ENCODE measurements at regions of chr1 and their contacts with region 1.

Region 1: DNA sequence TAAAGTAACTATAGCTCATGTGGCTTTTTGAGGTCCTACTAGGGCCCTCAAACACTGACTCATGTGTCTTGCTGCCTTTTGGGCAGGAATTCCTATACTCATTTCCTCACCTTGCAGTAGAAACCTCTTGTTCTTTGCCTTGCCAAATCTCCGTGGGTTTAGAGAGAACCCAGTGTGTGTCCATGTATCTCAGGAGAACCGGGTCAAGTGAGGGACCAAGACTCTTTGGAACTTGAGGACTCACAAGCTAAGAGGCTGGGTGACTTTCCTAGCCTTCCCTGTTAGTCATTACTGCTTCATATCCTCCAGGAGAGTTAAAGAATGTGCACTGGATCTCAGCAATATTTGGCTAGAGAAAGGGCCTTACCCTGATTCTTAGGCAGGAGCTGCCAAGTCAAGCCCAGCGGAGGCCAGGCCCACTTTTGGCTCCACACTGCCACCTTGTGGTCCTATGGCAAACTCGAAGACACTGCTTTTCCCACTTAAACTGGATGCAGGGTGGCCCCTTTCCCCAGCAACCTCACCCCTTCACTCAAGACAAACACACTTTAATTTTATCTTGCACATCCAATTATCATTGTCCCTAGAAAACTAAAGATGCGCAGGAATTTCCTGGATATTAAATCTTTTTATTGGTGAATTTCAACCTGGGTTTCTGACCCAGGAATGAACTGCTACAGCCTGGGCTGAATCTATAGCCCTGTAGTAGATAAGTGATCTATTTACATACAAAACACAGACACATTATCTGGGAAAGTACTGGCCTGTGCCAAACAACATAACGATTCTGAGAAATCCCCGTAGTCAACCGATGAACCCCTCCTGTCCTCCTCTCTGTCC is 10.6 kb downstream of the AVPR1B start:
- DNase-seq: peak; percentile 39
- ATAC-seq: peak; percentile 98
- H3K4me3 ChIP-seq: no peak overlapping the region
- H3K27ac ChIP-seq: no peak overlapping the region
- H3K4me1 ChIP-seq: no peaks in the 10 kb centered on the region
- H3K27me3 ChIP-seq: peaks cover 0 to 2% of the 10 kb centered on the region in 2 experiments; a peak in 2 of 4 replicates
- CTCF ChIP-seq: peak; percentile 83 to 96 (median 87)
- EP300 ChIP-seq: no peak
- POLR2A ChIP-seq: no peak
- RAD21 ChIP-seq: peak; percentile 98

Region 2: GRCh38 chr1:205849619-205850355 is 256.8 kb before region 1 on chr1 and contains the start of gene PM20D1:
- CTCF ChIA-PET with region 1: no interaction called
- POLR2A ChIA-PET with region 1: no interaction called
- RAD21 ChIA-PET with region 1: no interaction called
- SMC1A ChIA-PET with region 1: no interaction called
- in situ Hi-C with region 1: no loop called
- intact Hi-C with region 1: no loop called
- DNase-seq: no peak
- ATAC-seq: no peak
- H3K4me3 ChIP-seq: no peak within 1 kb of the TSS
- H3K27ac ChIP-seq: no peak within 1 kb of the TSS
- H3K4me1 ChIP-seq: no peaks in the 10 kb centered on the region
- H3K27me3 ChIP-seq: no peaks in the 10 kb centered on the region
- CTCF ChIP-seq: no peak
- EP300 ChIP-seq: no peak
- POLR2A ChIP-seq: no peak
- RAD21 ChIP-seq: no peak
- polyA plus RNA-seq, gene PM20D1: not detected

Region 3: DNA sequence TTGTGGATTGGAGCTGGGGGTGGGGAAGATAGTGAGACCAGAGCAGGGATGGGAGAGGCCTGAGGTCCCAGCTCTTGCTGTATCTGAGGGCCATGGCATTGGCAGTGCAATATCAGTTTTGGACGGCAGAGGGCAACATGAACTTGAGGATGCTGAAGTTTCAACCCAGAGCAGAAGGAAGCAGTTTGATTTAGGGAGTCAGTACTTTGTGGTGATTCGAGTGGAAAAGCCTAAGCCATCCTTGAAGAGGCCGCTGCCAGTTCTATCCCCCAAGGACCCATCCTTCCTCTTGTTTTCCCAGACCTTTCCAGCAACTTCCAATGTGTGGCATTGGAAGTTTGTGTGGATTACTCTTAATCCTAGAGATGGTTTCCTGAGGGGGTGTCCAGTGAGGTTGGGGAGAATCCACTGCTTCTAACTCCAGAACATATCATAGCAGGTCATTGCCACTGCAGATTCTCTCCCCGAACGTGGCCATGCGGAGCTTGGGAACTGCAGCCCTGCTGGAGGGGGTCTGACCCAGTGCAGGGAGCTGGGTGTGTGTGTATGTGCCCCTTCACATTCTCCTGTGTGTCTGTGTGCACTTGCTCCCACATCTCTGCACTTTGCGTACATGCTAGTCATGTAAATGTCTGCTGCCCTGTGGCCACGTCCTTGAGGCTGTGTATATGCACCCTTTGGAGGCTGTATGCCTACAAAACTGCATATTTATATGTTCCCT is 187.4 kb before region 1 on chr1:
- CTCF ChIA-PET with region 1: interaction called, 37 read pairs
- POLR2A ChIA-PET with region 1: no interaction called
- RAD21 ChIA-PET with region 1: interaction called, 32 read pairs
- SMC1A ChIA-PET with region 1: interaction called, 24 read pairs
- in situ Hi-C with region 1: no loop called
- intact Hi-C with region 1: loop called (anchors 1 kb)
- DNase-seq: peak; percentile 24
- ATAC-seq: peak; percentile 94
- H3K4me3 ChIP-seq: no peak overlapping the region
- H3K27ac ChIP-seq: no peak overlapping the region
- H3K4me1 ChIP-seq: no peaks in the 10 kb centered on the region; the same call in 1 of the 2 replicates
- H3K27me3 ChIP-seq: peaks cover 2 to 4% of the 10 kb centered on the region in 2 experiments; a peak in 2 of 4 replicates
- CTCF ChIP-seq: peak; percentile 90 to 93 (median 93)
- EP300 ChIP-seq: no peak
- POLR2A ChIP-seq: no peak
- RAD21 ChIP-seq: peak; percentile 91

Region 4: DNA sequence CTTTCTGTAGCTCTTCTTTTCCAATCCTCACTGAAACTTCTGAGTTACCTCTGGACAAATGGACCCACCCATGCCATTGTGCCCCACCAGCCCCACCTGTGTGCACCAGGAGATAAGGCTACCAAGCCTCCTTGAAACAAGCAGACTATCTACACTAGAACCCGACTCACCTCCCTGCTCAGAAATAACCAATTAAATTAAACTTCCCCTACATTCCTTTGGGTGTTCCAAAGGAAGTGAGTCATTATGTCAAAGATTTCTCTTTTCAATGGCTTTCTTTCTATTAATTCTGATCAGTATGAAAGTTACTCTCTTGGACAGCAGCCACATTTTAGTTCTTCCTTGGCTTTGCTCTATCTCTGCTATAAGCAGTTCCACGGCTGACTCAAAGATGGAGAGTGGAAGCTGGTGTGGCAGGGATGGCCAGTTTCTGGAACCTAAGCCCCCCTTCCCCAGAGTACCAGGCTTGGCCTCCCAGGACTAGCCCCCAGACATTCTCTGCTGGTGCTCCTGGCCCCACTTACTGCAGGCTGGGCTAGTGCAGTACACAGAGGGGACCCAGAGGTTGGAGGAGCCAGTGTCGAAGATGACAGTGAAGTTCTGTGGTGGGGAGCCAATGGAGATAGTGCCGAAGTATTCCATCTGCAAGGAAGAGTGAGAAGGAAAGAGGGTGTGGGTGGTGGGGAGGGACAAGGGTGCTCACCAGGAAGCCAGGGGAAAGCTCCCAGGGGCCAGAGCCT is 84.8 kb before region 1 on chr1:
- CTCF ChIA-PET with region 1: interaction called, 384 read pairs
- POLR2A ChIA-PET with region 1: no interaction called
- RAD21 ChIA-PET with region 1: interaction called, 12 read pairs
- SMC1A ChIA-PET with region 1: interaction called, 329 read pairs
- in situ Hi-C with region 1: loop called (anchors 5 kb)
- intact Hi-C with region 1: no loop called
- DNase-seq: no peak
- ATAC-seq: no peak
- H3K4me3 ChIP-seq: no peak overlapping the region
- H3K27ac ChIP-seq: no peak overlapping the region
- H3K4me1 ChIP-seq: no peaks in the 10 kb centered on the region
- H3K27me3 ChIP-seq: peaks cover 0 to 5% of the 10 kb centered on the region in 2 experiments; a peak in 2 of 4 replicates
- CTCF ChIP-seq: no peak
- EP300 ChIP-seq: no peak
- POLR2A ChIP-seq: no peak
- RAD21 ChIP-seq: no peak

Region 5: GRCh38 chr1:206050655-206051235 is 55.8 kb before region 1 on chr1:
- CTCF ChIA-PET with region 1: interaction called, 27 read pairs
- POLR2A ChIA-PET with region 1: no interaction called
- RAD21 ChIA-PET with region 1: interaction called, 9 read pairs
- SMC1A ChIA-PET with region 1: interaction called, 13 read pairs
- in situ Hi-C with region 1: no loop called
- intact Hi-C with region 1: no loop called
- DNase-seq: peak; percentile 100
- ATAC-seq: peak; percentile 88
- H3K4me3 ChIP-seq: no peak overlapping the region
- H3K27ac ChIP-seq: peak overlapping the region; percentile 91
- H3K4me1 ChIP-seq: peaks cover 53% of the 10 kb centered on the region
- H3K27me3 ChIP-seq: no peaks in the 10 kb centered on the region
- CTCF ChIP-seq: 0 out of 6 replicates have a peak, but pooled peaks of 1 of the 3 experiments have one; percentile 3
- EP300 ChIP-seq: peak; percentile 97 to 98
- POLR2A ChIP-seq: peak; percentile 69
- RAD21 ChIP-seq: 0 out of 2 replicates have a peak, but pooled peaks have one; percentile 15

Region 6: GRCh38 chr1:206094024-206094423 is 12.5 kb before region 1 on chr1:
- CTCF ChIA-PET with region 1: interaction called, 33 read pairs
- POLR2A ChIA-PET with region 1: interaction called, 3 read pairs
- RAD21 ChIA-PET with region 1: interaction called, 7 read pairs
- SMC1A ChIA-PET with region 1: interaction called, 9 read pairs
- in situ Hi-C with region 1: no loop called
- intact Hi-C with region 1: no loop called
- DNase-seq: no peak
- ATAC-seq: no peak
- H3K4me3 ChIP-seq: no peak overlapping the region
- H3K27ac ChIP-seq: no peak overlapping the region
- H3K4me1 ChIP-seq: no peaks in the 10 kb centered on the region; the same call in 1 of the 2 replicates
- H3K27me3 ChIP-seq: no peaks in the 10 kb centered on the region; a peak in 1 of 4 replicates
- CTCF ChIP-seq: no peak
- EP300 ChIP-seq: no peak
- POLR2A ChIP-seq: no peak
- RAD21 ChIP-seq: no peak

Measured in GM12878 (cell line).